MCF 10A (cell line): ENCODE measurements at regions of chr15 and their contacts with region 1.

Region 1: GRCh38 chr15:80455668-80456442 is 51.7 kb downstream of the ARNT2 start:
- DNase-seq: peak; percentile 77
- H3K4me3 Mint-ChIP-seq: no peak overlapping the region
- H3K27ac Mint-ChIP-seq: no peak overlapping the region
- H3K4me1 Mint-ChIP-seq: peaks cover 13% of the 10 kb centered on the region
- H3K27me3 Mint-ChIP-seq: no peaks in the 10 kb centered on the region
- CTCF ChIP-seq: peak; percentile 77

Region 2: GRCh38 chr15:80467311-80467714 is 11.5 kb after region 1 on chr15:
- CTCF ChIA-PET with region 1: interaction called, 12 read pairs
- POLR2A ChIA-PET with region 1: no interaction called
- intact Hi-C with region 1: no loop called
- DNase-seq: no peak
- H3K4me3 Mint-ChIP-seq: no peak overlapping the region
- H3K27ac Mint-ChIP-seq: no peak overlapping the region
- H3K4me1 Mint-ChIP-seq: no peaks in the 10 kb centered on the region
- H3K27me3 Mint-ChIP-seq: no peaks in the 10 kb centered on the region
- CTCF ChIP-seq: no peak

Region 3: DNA sequence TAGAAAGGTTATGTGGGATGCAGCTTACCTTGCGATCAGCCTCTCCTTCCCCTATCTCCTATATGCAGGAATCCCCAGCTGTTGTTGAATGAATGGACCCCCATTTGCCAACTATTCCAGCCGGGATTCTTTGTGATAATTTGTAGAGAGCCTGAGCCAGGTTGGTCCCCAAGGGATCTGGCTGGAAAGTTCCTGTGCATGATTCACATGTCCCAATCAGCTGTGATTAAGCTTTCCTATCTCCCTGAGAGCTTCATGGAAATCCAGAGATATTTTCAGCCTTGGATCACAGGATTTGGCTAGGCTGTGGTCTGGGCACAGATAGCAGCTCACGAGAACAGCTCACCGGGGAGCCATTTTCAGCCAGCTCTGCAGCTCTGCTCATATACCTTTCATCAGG is 25.1 kb after region 1 on chr15:
- CTCF ChIA-PET with region 1: interaction called, 20 read pairs
- POLR2A ChIA-PET with region 1: no interaction called
- intact Hi-C with region 1: no loop called
- DNase-seq: no peak
- H3K4me3 Mint-ChIP-seq: no peak overlapping the region
- H3K27ac Mint-ChIP-seq: no peak overlapping the region
- H3K4me1 Mint-ChIP-seq: peaks cover 15% of the 10 kb centered on the region
- H3K27me3 Mint-ChIP-seq: no peaks in the 10 kb centered on the region
- CTCF ChIP-seq: no peak

Region 4: DNA sequence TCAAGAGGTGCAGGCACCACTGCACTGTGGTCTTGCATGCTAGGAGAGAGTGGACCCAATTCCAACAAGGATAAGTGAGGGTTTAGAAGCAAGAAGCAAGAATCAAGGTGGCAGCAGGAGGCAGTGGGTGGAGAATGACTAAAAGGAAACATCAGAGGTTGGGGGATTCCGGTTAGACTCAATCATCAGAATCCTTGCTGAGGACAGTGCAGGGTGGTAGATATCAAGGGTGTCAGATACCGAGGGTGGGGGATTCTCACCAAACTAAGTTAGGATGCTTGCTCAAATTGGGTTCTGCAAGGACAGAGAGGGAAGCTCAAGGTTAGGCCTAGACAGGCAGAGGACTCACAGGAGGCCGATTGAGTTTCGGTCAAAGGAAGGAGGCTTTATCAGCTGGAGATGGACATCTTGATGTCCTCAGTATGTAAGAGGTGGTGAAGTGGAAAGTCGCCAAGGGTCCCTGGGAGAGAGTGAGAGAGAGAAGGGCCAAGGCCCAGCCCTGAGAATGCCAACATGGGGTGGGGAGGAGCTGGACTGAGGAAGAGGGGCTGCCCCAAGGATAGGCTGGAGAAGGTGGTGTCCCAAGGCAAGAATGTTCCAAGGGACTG is 50.5 kb after region 1 on chr15:
- CTCF ChIA-PET with region 1: no interaction called
- POLR2A ChIA-PET with region 1: no interaction called
- intact Hi-C with region 1: no loop called
- DNase-seq: no peak
- H3K4me3 Mint-ChIP-seq: no peak overlapping the region
- H3K27ac Mint-ChIP-seq: no peak overlapping the region
- H3K4me1 Mint-ChIP-seq: no peaks in the 10 kb centered on the region
- H3K27me3 Mint-ChIP-seq: no peaks in the 10 kb centered on the region
- CTCF ChIP-seq: no peak

Region 5: DNA sequence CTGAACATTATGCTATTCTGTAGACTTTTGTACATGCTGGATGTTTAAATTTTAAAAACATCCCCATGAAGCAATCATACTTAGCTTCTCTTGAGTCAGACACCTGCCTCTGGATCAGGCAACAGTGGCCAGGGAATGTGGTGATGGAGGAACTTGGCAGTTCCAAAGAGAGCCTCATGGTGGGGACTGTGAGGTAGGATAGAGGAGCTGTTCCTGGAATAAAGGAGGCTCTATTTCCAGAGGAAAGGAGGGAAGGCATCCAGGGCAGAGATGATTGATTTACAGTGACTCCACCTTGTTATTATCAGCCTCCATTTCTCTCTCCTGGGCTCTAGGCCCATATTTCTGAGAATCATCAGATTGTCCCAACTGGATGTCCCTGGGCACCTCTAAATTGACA is 204.3 kb after region 1 on chr15:
- CTCF ChIA-PET with region 1: no interaction called
- POLR2A ChIA-PET with region 1: no interaction called
- intact Hi-C with region 1: loop called (anchors 1 kb)
- DNase-seq: peak; percentile 63
- H3K4me3 Mint-ChIP-seq: no peak overlapping the region
- H3K27ac Mint-ChIP-seq: no peak overlapping the region
- H3K4me1 Mint-ChIP-seq: peaks cover 17% of the 10 kb centered on the region
- H3K27me3 Mint-ChIP-seq: no peaks in the 10 kb centered on the region
- CTCF ChIP-seq: peak; percentile 48

Region 6: GRCh38 chr15:80970018-80970658 is 514.3 kb after region 1 on chr15:
- CTCF ChIA-PET with region 1: interaction called, 75 read pairs
- POLR2A ChIA-PET with region 1: interaction called, 6 read pairs
- intact Hi-C with region 1: loop called (anchors 1 kb)
- DNase-seq: peak; percentile 71
- H3K4me3 Mint-ChIP-seq: no peak overlapping the region
- H3K27ac Mint-ChIP-seq: no peak overlapping the region
- H3K4me1 Mint-ChIP-seq: no peaks in the 10 kb centered on the region
- H3K27me3 Mint-ChIP-seq: no peaks in the 10 kb centered on the region
- CTCF ChIP-seq: peak; percentile 79

Region 7: DNA sequence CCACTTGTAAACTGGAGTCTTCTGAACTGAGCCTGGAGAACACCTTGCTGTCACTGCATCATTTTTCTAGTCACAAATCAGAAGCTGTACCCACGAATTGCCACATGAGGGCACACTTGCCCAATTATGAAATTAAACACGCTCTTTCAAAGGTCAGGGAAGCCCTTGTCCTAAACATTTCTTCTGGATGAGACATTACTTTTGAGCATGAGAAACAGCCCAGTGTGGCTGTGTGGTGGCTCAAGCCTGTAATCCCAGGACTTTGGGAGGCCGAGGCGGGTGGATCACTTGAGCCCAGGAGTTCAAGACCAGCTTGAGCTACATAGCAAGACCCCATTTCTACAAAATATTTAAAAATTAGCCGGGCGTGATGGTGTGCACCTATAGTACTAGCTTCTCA is 650.7 kb after region 1 on chr15:
- CTCF ChIA-PET with region 1: no interaction called
- POLR2A ChIA-PET with region 1: no interaction called
- intact Hi-C with region 1: loop called (anchors 10 kb)
- DNase-seq: peak; percentile 76
- H3K4me3 Mint-ChIP-seq: no peak overlapping the region
- H3K27ac Mint-ChIP-seq: no peak overlapping the region
- H3K4me1 Mint-ChIP-seq: peaks cover 23% of the 10 kb centered on the region
- H3K27me3 Mint-ChIP-seq: no peaks in the 10 kb centered on the region
- CTCF ChIP-seq: peak; percentile 75